ENCODE measurements at regions of chr16 and their contacts with region 1.

Region 1: GRCh38 chr16:79071424-79071823 is 529.1 kb downstream of the MAF start:
- DNase-seq: no peak
- H3K4me3 Mint-ChIP-seq: no peak overlapping the region
- H3K27ac Mint-ChIP-seq: no peak overlapping the region
- H3K4me1 Mint-ChIP-seq: peaks cover 75% of the 10 kb centered on the region
- H3K27me3 Mint-ChIP-seq: no peaks in the 10 kb centered on the region

Region 2: DNA sequence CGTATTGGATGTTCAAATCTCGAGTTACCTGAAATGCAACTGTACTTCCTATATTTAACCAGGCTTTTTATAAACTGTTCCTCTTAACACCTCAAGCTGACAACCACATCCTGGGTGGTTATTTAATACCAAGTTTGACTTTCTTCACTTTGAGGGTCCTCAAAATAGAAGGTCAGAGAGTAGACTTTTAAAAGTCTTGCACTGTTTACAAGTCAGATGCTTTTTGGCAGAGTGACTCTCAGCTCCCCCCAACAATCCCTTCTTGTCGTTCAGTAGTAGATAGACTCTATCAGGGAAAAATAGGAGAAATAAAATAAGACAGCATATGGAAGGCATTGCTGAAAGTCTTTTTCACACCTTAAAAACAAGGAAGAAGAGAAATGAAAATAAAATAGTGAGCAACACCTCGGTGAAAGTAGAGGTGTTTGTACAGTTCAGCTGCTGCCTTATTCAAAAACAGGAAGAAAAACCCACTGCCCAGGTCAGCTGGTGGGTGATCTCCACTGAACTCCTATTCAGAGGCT is 321.6 kb before region 1 on chr16:
- intact Hi-C with region 1: no loop called
- DNase-seq: no peak
- H3K4me3 Mint-ChIP-seq: no peak overlapping the region
- H3K27ac Mint-ChIP-seq: no peak overlapping the region
- H3K4me1 Mint-ChIP-seq: peaks cover 18% of the 10 kb centered on the region
- H3K27me3 Mint-ChIP-seq: peaks cover 9% of the 10 kb centered on the region

Region 3: DNA sequence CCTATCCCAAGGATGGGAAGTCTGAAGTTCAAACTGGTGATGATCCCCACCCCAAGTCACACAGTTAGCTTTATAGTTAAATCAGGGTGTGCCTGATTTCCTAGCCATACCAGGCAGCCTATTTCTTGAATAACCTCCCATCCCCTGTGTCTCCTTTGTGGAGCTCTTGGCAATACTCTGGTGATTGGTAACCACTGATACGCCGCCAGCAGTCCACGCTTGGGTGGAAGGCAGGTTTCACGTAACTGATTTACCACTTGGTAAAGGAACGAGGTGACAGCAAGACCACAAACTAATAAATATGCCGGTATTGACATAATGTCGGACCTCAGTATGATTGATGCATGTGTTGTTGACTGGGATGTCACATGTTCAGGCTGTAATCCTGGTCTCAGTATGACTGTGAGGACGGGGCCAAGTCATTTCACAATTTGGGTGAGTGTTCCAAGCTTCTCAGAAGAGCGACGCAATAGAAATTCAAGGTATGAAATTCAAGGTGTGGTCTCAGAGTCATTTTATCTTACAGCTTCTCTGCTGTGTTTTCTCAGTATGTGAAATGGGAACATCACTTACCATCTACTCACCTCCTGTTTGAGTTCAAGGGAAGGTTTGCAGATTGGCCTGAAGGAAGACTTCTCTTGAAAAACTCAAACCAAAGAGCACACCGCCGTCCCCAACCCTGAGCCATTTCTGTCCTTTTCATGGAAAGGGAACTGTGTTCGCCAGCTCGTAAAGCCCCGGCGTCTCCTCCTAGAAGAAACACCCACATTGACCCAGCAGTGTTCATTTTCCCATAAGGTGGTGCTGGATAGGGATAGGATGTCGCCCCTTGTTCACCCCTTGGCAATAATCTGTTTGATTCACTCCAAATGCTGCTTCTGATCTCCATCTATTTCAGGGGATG is 293.1 kb before region 1 on chr16:
- intact Hi-C with region 1: loop called (anchors 1 kb)
- DNase-seq: peak; percentile 54
- H3K4me3 Mint-ChIP-seq: peak overlapping the region; percentile 58
- H3K27ac Mint-ChIP-seq: peak overlapping the region; percentile 91
- H3K4me1 Mint-ChIP-seq: peaks cover 61% of the 10 kb centered on the region
- H3K27me3 Mint-ChIP-seq: no peaks in the 10 kb centered on the region

Region 4: DNA sequence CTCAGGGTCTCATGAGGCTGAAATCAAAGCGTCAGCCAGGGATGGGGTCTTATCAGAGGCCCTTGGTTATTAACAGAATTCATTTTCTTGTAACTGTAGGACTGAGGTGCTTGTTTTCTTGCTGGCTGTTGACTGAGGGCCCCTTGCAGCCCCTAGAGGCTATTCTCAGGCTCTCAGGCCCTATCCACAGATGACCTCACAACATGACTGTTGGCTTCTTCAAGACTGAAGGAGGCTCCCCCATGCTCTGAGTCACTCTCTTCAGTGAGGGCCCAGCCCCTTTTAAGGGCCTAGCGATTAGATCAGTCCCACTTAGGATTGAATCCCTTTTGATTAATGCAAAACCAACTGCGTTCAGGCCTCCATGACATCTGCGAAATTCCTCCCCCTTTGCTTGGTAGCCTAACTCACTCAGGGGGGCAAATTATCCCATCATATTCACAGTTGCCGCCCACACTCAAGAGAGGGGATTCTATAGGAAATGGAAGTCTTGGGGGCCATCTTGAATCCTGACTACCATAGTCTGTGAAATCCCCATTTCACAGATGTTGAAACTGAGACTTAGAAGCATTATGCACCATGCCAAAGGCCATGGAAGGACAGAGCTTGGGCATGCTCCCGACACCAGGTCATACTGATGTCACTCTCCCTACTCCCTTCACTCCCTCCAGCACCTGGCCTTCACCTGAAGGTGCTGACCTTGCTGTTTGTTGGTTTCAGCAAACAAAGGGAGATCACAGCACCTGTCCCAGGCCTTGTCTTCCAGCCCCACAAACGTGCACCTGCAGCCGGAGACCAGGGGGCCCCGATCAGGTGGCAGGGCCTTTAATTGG is 63.2 kb before region 1 on chr16:
- intact Hi-C with region 1: loop called (anchors 2 kb)
- DNase-seq: no peak
- H3K4me3 Mint-ChIP-seq: no peak overlapping the region
- H3K27ac Mint-ChIP-seq: peak overlapping the region; percentile 54
- H3K4me1 Mint-ChIP-seq: peaks cover 24% of the 10 kb centered on the region
- H3K27me3 Mint-ChIP-seq: no peaks in the 10 kb centered on the region

Region 5: GRCh38 chr16:79217375-79218011 is 146.1 kb after region 1 on chr16:
- intact Hi-C with region 1: loop called (anchors 2 kb)
- DNase-seq: peak; percentile 34
- H3K4me3 Mint-ChIP-seq: no peak overlapping the region
- H3K27ac Mint-ChIP-seq: peak overlapping the region; percentile 13
- H3K4me1 Mint-ChIP-seq: peaks cover 32% of the 10 kb centered on the region
- H3K27me3 Mint-ChIP-seq: no peaks in the 10 kb centered on the region

Region 6: DNA sequence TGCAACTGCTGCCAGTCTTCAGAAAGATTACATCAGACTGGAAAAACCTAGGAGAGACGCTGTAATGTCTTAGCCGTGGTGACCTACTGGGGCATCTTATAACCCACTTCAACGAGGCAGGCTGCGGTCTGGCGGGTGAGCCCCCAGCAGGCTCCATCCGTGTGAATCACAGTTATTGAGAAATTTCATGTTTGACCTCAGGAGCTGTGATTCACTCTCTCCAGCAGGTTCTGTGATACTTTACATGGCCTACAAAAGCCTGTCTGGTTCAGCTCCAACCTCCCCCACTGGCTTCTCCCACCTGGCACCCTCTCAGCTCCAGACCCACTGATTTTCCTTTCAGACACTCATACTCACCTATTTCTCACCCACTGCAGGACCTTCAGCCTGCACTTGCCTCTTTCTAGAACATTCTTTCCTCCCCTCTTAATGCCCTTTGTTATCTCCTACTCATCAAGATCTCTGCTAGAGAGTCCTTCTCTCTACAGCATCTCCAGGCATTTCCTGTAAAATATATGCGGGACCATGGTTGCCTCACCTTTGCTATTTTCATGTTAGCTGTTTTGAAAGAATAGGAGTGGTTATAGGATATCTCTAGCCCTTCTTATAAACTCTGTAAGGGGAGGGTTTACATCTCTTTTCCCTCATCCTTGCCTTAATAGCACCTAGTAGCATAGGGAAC is 301.2 kb after region 1 on chr16:
- intact Hi-C with region 1: loop called (anchors 10 kb)
- DNase-seq: no peak
- H3K4me3 Mint-ChIP-seq: no peak overlapping the region
- H3K27ac Mint-ChIP-seq: peak overlapping the region; percentile 69
- H3K4me1 Mint-ChIP-seq: peaks cover 15% of the 10 kb centered on the region
- H3K27me3 Mint-ChIP-seq: no peaks in the 10 kb centered on the region

Region 7: GRCh38 chr16:79845033-79845733 is 773.8 kb after region 1 on chr16:
- intact Hi-C with region 1: loop called (anchors 10 kb)
- DNase-seq: no peak
- H3K4me3 Mint-ChIP-seq: peak overlapping the region; percentile 39
- H3K27ac Mint-ChIP-seq: peak overlapping the region; percentile 82
- H3K4me1 Mint-ChIP-seq: peaks cover 38% of the 10 kb centered on the region
- H3K27me3 Mint-ChIP-seq: peaks cover 2% of the 10 kb centered on the region